Lower leg skin (tissue), 4 donors: ENCODE measurements at regions of chr17 and their contacts with region 1.

Region 1: GRCh38 chr17:57511430-57512123 is 233.5 kb downstream of the CCDC182 start:
- DNase-seq: no peak
- H3K4me3 ChIP-seq: no peak overlapping the region
- CTCF ChIP-seq: no peak
- POLR2A ChIP-seq: no peak

Region 2: DNA sequence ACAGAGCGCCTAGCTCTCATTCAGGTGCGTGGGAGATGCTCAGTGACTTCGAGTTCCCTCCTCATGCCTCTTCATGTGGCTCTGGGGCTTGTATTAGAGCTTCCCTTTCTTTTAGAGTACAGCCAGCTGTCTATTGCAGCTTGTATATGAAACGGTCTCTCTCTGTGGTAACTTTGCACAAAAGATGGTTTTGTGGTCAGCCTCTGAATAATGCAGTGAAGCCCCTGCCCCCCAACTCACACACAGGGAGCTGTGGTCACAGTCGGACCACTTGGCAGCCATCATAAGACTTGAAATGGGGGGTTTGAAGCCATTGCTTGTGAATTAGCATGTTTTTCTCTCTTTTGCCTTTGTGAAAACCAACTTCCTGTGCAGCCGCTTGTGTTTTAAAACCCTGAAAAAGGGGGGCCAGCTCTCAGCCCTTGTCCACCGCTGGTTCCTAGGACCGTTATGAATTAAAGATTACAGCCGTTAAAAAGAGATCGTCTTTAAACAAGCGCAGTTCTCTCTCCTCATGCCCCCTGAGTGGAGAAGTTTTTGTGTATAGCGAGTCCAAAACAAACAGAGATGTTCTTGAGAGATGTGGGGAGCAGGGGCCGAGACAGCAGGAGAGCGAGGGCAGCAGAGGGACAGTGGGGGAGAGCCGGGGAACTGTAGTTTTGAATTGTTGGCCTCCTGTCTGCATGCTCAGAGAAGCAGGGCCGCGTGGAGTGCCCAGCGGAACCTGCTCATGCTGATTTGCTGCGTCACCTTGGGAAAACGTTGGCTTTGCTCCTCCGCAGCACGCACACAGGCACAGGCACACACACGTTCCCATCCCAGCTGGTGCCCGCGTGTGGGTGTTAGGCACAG is 56.3 kb before region 1 on chr17:
- intact Hi-C with region 1: no loop called
- DNase-seq: no peak
- H3K4me3 ChIP-seq: no peak overlapping the region
- CTCF ChIP-seq: no peak
- POLR2A ChIP-seq: no peak

Region 3: DNA sequence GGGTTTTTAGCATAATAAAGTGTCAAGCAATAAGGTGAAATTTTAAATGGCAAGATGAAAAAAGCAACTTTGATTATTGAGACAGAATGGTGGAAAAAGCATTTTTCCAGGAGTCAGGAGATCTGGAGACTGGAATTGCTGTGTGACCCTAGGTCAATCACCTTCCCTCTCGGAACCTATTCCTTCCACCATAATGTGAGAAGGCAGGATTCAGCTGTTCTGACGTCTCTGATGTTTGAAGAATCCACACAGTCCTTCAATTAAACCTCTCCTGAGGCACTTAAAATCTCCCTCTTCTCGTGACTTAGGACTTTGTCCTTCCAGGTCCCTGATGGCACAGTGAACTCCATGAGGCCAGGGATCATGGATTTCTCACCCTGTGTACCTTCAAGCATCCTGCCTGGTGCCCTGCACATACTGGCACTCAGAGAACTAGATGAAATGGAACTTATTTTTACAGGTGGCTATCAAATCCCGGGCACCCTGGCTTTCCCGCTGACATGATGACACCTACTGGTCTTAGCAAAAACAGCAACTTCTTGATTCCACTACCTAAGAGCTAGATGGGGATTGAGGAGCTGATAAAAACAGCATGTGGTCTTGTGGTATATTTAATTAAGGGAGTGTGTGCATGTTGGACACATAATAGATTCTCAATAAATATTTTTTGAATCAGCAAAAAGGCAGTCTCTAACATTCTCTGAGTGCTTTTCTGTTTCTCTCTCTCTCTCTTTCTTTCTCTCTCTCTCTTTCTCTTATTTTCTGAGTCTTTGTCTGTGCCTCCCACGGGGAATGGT is 235.8 kb after region 1 on chr17:
- intact Hi-C with region 1: no loop called
- DNase-seq: peak; percentile 18 to 86
- H3K4me3 ChIP-seq: no peak overlapping the region
- CTCF ChIP-seq: no peak
- POLR2A ChIP-seq: no peak

Region 4: DNA sequence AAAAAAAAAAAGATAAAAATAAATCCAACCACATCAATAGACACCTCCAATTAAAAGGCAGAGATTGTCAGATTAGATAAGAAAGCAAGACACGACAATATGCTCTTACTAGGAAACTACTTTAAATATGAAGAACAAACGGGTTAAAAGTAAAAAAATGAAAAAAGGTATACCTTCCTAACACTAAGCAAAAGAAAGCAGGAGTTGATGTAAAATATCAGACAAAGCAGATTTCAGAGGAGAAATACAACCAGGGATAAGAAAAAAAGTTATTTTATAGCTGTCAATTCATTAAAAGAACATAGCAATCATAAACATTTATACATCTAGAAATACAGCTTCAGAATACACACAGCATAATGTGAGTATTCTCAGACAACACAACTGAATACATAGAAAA is 283.3 kb after region 1 on chr17:
- intact Hi-C with region 1: no loop called
- DNase-seq: no peak
- H3K4me3 ChIP-seq: no peak overlapping the region
- CTCF ChIP-seq: no peak
- POLR2A ChIP-seq: no peak

Region 5: GRCh38 chr17:59190806-59191205 is 1679.2 kb after region 1 on chr17:
- intact Hi-C with region 1: loop called (anchors 5 kb)
- DNase-seq: no peak
- H3K4me3 ChIP-seq: no peak overlapping the region
- CTCF ChIP-seq: no peak
- POLR2A ChIP-seq: no peak